Activated CD8-positive, alpha-beta T cell treated with anti-CD3 and anti-CD28 coated beads, Interleukin-2, amount 10 ng/mL, durations not matched to agents 7 days and 5 days (primary cell): ENCODE measurements at regions of chr10 and their contacts with region 1.

Region 1: DNA sequence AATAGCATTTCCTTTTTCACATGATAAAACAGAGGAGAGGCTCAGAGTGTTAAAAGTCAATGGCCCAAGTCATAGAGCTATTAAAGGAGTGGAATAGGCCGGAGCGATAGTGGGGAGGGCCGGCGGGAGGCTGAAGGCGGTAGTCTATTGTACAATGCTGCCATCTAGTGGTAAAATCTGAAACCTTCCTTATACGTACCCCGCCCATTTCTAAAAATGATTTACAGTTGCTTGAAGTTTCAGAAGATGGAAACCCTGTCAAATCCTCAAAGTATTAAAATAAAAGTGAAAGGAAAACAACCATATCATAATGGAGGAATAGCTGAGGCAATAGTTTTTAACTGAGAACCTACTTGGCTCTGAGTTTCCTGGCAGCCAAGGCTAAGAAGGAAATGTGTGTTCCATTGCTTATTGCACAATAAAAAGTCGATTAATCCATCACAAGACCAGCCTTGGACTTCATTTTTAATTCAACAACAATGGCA is 209.1 kb downstream of the CCSER2 start:
- DNase-seq: peak; percentile 53
- ATAC-seq: peak; percentile 70
- H3K4me3 Mint-ChIP-seq: no peak overlapping the region
- H3K27ac Mint-ChIP-seq: no peak overlapping the region
- H3K4me1 Mint-ChIP-seq: peaks cover 8% of the 10 kb centered on the region
- H3K27me3 Mint-ChIP-seq: peaks cover 17% of the 10 kb centered on the region

Region 2: GRCh38 chr10:84256510-84257342 is 280.8 kb before region 1 on chr10:
- CTCF ChIA-PET with region 1: interaction called, 260 read pairs
- POLR2A ChIA-PET with region 1: no interaction called
- DNase-seq: peak; percentile 61
- ATAC-seq: peak; percentile 75
- H3K4me3 Mint-ChIP-seq: no peak overlapping the region
- H3K27ac Mint-ChIP-seq: no peak overlapping the region
- H3K4me1 Mint-ChIP-seq: peaks cover 3% of the 10 kb centered on the region
- H3K27me3 Mint-ChIP-seq: peaks cover 7% of the 10 kb centered on the region

Region 3: GRCh38 chr10:84333864-84334451 is 203.5 kb before region 1 on chr10:
- CTCF ChIA-PET with region 1: interaction called, 19 read pairs
- POLR2A ChIA-PET with region 1: no interaction called
- DNase-seq: peak; percentile 79
- ATAC-seq: peak; percentile 81
- H3K4me3 Mint-ChIP-seq: peak overlapping the region; percentile 53
- H3K27ac Mint-ChIP-seq: peak overlapping the region; percentile 81
- H3K4me1 Mint-ChIP-seq: peaks cover 49% of the 10 kb centered on the region
- H3K27me3 Mint-ChIP-seq: no peaks in the 10 kb centered on the region

Region 4: GRCh38 chr10:84352251-84352842 is 185.1 kb before region 1 on chr10:
- CTCF ChIA-PET with region 1: interaction called, 72 read pairs
- POLR2A ChIA-PET with region 1: no interaction called
- DNase-seq: peak; percentile 79
- ATAC-seq: peak; percentile 93
- H3K4me3 Mint-ChIP-seq: no peak overlapping the region
- H3K27ac Mint-ChIP-seq: no peak overlapping the region
- H3K4me1 Mint-ChIP-seq: peaks cover 54% of the 10 kb centered on the region
- H3K27me3 Mint-ChIP-seq: no peaks in the 10 kb centered on the region

Region 5: DNA sequence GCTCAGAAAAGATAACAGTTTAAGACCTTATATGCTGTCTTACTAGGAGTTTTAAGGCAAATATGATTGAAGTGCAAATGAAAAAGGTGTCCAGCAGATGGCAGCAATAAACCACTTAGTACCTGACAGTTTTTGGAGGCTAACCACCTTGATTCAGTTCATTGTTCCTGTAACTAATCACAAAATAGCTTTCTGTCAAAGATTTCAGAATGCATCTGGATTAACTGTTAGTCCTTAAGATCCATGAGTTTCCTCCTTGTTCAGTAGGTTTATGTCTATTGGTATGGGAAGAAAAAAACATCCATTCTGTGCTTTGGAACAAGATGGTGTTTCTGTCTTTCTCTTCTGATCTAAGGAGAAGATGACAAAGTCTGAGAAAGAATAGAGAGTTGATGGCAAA is 162.5 kb before region 1 on chr10:
- CTCF ChIA-PET with region 1: interaction called, 69 read pairs
- POLR2A ChIA-PET with region 1: no interaction called
- DNase-seq: peak; percentile 65
- ATAC-seq: no peak
- H3K4me3 Mint-ChIP-seq: no peak overlapping the region
- H3K27ac Mint-ChIP-seq: no peak overlapping the region
- H3K4me1 Mint-ChIP-seq: peaks cover 22% of the 10 kb centered on the region
- H3K27me3 Mint-ChIP-seq: no peaks in the 10 kb centered on the region

Region 6: GRCh38 chr10:84429926-84430520 is 107.5 kb before region 1 on chr10:
- CTCF ChIA-PET with region 1: interaction called, 50 read pairs
- POLR2A ChIA-PET with region 1: no interaction called
- DNase-seq: peak; percentile 77
- ATAC-seq: peak; percentile 91
- H3K4me3 Mint-ChIP-seq: no peak overlapping the region
- H3K27ac Mint-ChIP-seq: no peak overlapping the region
- H3K4me1 Mint-ChIP-seq: peaks cover 9% of the 10 kb centered on the region
- H3K27me3 Mint-ChIP-seq: no peaks in the 10 kb centered on the region